Left ventricle myocardium superior (tissue), 1 donor: ENCODE measurements at regions of chr4 and their contacts with region 1.

Region 1: GRCh38 chr4:38179690-38180377 is 219.6 kb downstream of the PTTG2 start:
- DNase-seq: peak; percentile 68
- ATAC-seq: peak; percentile 63

Region 2: GRCh38 chr4:37628977-37629609 is 550.7 kb before region 1 on chr4:
- intact Hi-C with region 1: no loop called
- DNase-seq: no peak
- ATAC-seq: peak; percentile 71

Region 3: DNA sequence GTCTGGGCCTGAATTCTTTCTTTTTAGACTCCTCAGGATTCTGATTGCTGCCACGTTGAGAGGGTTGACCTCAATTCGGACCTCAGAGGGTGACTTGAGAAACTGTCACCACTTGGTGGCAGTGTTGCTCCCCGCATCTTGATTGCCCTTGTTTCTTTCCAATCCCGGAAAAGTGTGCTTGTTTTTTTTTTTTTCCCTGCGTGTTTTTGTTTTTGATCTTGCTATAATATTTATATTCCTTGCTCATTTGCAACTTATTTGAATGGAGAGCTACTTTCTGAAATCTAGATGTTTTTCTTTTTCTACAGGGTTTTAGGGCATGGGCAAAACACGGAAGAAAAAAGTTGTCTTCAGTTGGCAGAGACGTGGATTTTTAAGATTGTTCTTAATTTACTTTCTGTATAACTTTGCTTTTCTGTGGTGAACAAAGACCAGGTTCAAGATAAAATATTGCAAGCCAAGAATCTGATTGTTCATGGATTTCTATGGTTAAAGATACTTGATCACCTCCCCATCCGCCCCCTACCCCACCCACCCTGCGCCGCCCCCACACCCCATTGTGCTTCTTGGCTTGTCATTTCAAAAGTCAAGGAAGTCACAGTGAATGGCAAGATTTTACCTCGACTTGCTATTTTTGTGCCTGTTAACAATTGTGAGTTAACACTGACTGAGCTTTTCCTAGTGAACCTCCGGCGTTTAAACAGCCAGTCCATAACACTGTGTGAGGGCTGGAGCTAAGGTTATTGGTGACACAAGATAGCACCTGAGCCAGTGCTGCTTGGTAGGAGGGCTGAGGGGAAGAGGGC is 117.5 kb before region 1 on chr4:
- intact Hi-C with region 1: loop called (anchors 10 kb)
- DNase-seq: peak; percentile 84
- ATAC-seq: peak; percentile 80

Region 4: DNA sequence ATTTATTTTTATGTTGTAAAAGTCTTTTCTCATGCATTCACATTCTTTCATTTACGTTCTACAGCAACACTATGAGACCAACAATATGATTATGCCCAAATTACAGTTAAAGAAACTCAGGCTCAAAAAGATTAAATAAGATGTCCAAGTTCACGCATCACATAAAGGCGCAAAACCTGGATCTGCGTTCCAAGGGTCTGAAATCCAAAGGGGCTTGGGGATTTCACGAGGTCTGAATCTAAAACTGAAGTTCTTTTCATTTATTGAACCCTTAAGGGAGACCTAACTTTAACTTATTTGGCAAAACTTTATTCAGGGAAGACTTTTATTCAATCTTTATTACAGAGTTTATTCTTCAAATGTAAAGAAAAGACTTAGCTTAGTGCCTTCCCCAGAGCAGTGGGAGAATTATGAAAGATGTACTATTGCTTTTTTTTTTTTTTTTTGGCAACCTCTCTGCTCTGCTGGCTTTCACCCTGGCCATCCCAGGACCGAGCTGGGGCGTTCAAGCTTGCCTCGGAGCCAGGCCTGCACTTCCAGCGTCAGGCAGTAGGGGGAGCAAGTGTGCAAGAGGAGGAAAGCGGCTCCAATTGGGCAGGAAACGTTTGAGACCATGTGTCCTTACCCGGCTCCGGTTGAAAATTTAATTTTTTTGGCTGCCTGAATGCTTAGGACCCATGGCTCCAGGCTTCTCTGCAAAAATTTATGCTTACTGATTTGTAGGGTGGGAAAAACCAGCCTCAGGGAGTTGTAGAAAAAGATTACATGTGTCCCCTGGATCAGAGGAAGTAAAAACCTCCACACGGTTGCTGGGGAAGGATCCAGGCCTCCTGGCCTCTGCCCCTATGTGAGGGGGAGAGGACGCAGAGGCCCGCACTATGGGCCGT is 139.9 kb after region 1 on chr4:
- intact Hi-C with region 1: loop called (anchors 5 kb)
- DNase-seq: peak; percentile 96
- ATAC-seq: peak; percentile 86

Region 5: GRCh38 chr4:38675146-38676121 is 495.6 kb after region 1 on chr4:
- intact Hi-C with region 1: loop called (anchors 2 kb)
- DNase-seq: peak; percentile 52
- ATAC-seq: peak; percentile 52

Region 6: GRCh38 chr4:38730830-38731646 is 551.2 kb after region 1 on chr4:
- intact Hi-C with region 1: loop called (anchors 2 kb)
- DNase-seq: peak; percentile 89
- ATAC-seq: peak; percentile 91